Naive thymus-derived CD4-positive, alpha-beta T cell (primary cell): ENCODE measurements at regions of chrX and their contacts with region 1.

Region 1: GRCh38 chrX:44244008-44244407 is 99.5 kb downstream of the EFHC2 start:
- DNase-seq: peak in 6 of 9 donors; percentile 8 to 51 (median 40)
- ATAC-seq: peak; percentile 46
- H3K4me3 ChIP-seq: no peak overlapping the region
- H3K4me3 Mint-ChIP-seq: peak overlapping the region in 2 of 10 donors; percentile 0 to 6
- H3K27ac ChIP-seq: no peak overlapping the region
- H3K27ac Mint-ChIP-seq: peak overlapping the region in 8 of 9 donors; percentile 5 to 79 (median 52)
- H3K4me1 ChIP-seq: peaks cover 5 to 22% of the 10 kb centered on the region in 2 donors
- H3K4me1 Mint-ChIP-seq: peaks cover 10 to 46% (median 30%) of the 10 kb centered on the region in 7 donors
- H3K27me3 ChIP-seq: no peaks in the 10 kb centered on the region
- H3K27me3 Mint-ChIP-seq: no peaks in the 10 kb centered on the region

Region 2: GRCh38 chrX:43836435-43837184 is 407.4 kb before region 1 on chrX:
- CTCF ChIA-PET with region 1: interaction called, 3 read pairs
- POLR2A ChIA-PET with region 1: no interaction called
- intact Hi-C with region 1: loop called (anchors 1 kb)
- DNase-seq: peak in 5 of 9 donors; percentile 8 to 39 (median 20)
- ATAC-seq: no peak
- H3K4me3 ChIP-seq: no peak overlapping the region
- H3K4me3 Mint-ChIP-seq: no peak overlapping the region
- H3K27ac ChIP-seq: no peak overlapping the region
- H3K27ac Mint-ChIP-seq: no peak overlapping the region
- H3K4me1 ChIP-seq: no peaks in the 10 kb centered on the region
- H3K4me1 Mint-ChIP-seq: no peaks in the 10 kb centered on the region
- H3K27me3 ChIP-seq: no peaks in the 10 kb centered on the region
- H3K27me3 Mint-ChIP-seq: peaks cover 0 to 6% (median 0%) of the 10 kb centered on the region in 5 donors

Region 3: DNA sequence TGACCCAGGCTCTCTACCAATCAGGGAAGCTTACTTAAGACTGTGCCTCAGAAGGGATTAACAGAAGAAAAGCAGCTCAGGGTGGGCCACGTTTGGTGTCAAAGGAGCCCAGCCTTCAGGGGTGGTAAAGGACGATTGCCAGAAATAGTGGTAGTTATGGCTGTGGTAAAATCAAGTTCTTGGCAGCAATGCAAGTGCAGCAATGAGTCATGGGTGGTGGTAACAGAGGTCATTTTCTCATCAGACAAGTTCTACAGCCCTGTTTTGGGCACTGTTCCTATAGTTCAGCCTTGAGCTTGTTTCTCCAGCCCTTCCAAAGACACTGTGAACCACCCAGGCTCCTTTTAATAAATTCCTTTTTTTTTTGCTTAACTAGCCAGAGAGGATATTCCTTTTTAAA is 20.9 kb before region 1 on chrX:
- CTCF ChIA-PET with region 1: no interaction called
- POLR2A ChIA-PET with region 1: no interaction called
- intact Hi-C with region 1: no loop called
- DNase-seq: no peak
- ATAC-seq: no peak
- H3K4me3 ChIP-seq: no peak overlapping the region
- H3K4me3 Mint-ChIP-seq: no peak overlapping the region
- H3K27ac ChIP-seq: no peak overlapping the region
- H3K27ac Mint-ChIP-seq: no peak overlapping the region
- H3K4me1 ChIP-seq: no peaks in the 10 kb centered on the region
- H3K4me1 Mint-ChIP-seq: peaks cover 0 to 11% (median 3%) of the 10 kb centered on the region in 7 donors
- H3K27me3 ChIP-seq: no peaks in the 10 kb centered on the region
- H3K27me3 Mint-ChIP-seq: peaks cover 0 to 5% (median 0%) of the 10 kb centered on the region in 5 donors

Region 4: DNA sequence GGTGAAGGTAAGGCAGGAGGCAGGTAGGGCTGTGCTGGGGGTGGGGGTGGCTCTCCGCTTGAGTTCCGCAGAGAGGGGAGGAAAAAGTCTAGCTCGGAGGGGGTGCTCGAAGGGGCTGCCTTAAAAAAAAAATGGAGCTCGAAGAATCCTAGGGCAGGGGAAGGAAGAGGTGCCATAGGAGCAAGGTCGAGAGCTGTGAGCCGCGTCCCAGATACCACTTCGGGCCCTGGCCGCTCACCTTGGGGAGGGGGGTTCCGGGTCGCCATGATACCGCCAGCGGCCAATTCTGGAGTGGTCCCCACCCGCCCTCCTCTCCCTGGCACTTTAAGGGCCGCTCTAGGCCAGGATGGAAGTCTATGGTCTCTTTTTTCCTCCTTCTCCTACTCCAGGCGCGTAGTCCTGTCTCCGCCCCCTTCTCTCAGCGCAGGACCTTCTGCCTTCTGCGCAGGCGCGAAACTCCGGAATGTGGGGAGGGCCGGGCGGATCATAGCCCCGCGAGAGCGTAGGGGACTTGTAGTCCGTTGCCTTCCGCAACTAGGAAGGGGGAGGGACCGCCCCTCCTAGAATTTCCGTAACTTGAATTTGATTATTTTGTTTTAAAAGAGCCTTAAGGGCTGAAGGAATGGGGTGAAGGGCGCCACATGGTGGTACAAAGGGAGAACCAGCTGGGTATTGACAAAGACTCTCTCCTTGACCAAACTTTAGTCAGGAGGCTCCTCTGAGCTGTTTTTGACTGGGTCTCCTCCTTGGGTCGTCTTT is 298.7 kb after region 1 on chrX and contains the start of gene FUNDC1:
- CTCF ChIA-PET with region 1: interaction called, 3 read pairs
- POLR2A ChIA-PET with region 1: no interaction called
- intact Hi-C with region 1: loop called (anchors 1 to 10 kb)
- DNase-seq: peak; percentile 75 to 93 (median 89)
- ATAC-seq: peak; percentile 98
- H3K4me3 ChIP-seq: peak within 1 kb of the TSS; percentile 79
- H3K4me3 Mint-ChIP-seq: peak within 1 kb of the TSS; percentile 89 to 97 (median 93)
- H3K27ac ChIP-seq: peak within 1 kb of the TSS; percentile 92
- H3K27ac Mint-ChIP-seq: peak within 1 kb of the TSS; percentile 86 to 97 (median 93)
- H3K4me1 ChIP-seq: peaks cover 5 to 12% of the 10 kb centered on the region in 2 donors
- H3K4me1 Mint-ChIP-seq: peaks cover 12 to 54% (median 37%) of the 10 kb centered on the region in 7 donors
- H3K27me3 ChIP-seq: no peaks in the 10 kb centered on the region
- H3K27me3 Mint-ChIP-seq: no peaks in the 10 kb centered on the region
- total RNA-seq, gene FUNDC1: 5.2 to 10.1 (median 9.8) TPM